ENCODE measurements at regions of chr16 and their contacts with region 1.

Region 1: DNA sequence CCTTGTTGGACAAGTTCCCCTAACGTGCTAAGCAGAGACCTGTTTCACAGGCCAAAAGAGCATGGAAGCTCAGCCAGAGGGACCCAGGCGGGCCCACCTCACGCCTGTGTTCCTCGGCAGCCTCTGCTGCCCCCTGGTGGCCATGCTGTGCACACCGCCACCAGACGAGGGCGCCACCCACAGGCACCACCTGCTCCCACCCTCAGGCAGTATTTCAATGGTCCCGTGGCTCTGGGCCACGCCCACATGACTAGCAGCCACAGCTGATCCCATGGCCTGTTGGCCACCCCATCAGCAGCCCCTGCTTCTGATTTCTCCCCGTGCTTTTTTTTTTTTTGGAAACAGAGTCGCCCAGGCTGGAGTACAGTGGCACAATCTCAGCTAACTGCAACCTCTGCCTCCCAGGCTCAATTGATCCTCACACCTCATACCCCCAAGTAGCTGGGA is 18.9 kb downstream of the MPG start:
- DNase-seq: peak; percentile 95
- H3K4me3 ChIP-seq: no peak overlapping the region; a peak in 1 of 4 replicates
- H3K27ac ChIP-seq: no peak overlapping the region
- H3K4me1 ChIP-seq: peaks cover 0 to 8% of the 10 kb centered on the region in 2 experiments; a peak in 1 of 4 replicates
- H3K27me3 ChIP-seq: no peaks in the 10 kb centered on the region
- CTCF ChIP-seq: peak; percentile 99
- EP300 ChIP-seq: no peak
- RAD21 ChIP-seq: peak; percentile 83

Region 2: GRCh38 chr16:77807-78443 is 19.0 kb before region 1 on chr16 and contains the start of gene MPG:
- CTCF ChIA-PET with region 1: interaction called, 793 read pairs
- POLR2A ChIA-PET with region 1: interaction called, 5 read pairs
- DNase-seq: peak; percentile 100
- H3K4me3 ChIP-seq: peak within 1 kb of the TSS; percentile 76 to 92
- H3K27ac ChIP-seq: peak within 1 kb of the TSS; percentile 58 to 84
- H3K4me1 ChIP-seq: peaks cover 20 to 51% of the 10 kb centered on the region in 2 experiments
- H3K27me3 ChIP-seq: no peaks in the 10 kb centered on the region
- CTCF ChIP-seq: no peak
- EP300 ChIP-seq: no peak
- RAD21 ChIP-seq: no peak
- polyA plus RNA-seq, gene MPG: 93.3 and 98.3 TPM in 2 replicates

Region 3: DNA sequence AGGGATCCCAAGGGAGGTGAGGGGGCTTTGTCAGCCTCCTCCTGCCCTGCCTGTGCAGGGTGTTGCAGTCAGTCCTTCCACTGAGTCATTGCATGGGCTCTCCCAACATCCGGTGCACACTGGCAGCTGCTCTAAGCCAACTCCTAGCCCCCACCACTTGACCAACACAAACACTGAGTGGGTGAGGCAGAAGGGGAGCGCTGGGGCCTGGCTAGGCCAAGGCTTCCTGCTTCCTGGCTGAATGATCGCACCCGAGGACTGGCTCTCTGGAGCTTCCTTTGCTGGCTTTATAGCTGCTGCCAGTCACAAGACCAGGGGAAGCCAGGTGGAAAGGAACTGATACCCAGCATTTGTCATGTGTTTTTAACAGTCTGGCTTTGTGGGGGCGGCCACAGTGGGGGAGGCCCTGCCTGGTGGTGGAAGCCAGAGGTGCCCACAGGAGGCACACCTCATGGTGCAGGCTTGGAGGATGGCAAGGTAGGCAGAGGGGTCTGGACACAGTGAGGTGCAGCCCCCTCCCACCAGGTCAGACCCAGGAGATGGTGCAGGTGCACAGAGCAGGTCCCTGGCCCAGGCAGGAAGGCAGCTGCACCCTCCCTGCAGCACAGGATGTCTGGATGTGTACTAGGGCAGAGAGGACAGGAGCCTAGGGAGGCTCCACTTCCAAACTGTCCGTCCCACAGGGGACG is 12.1 kb before region 1 on chr16:
- CTCF ChIA-PET with region 1: interaction called, 45 read pairs
- POLR2A ChIA-PET with region 1: no interaction called
- DNase-seq: no peak
- H3K4me3 ChIP-seq: no peak overlapping the region
- H3K27ac ChIP-seq: peak overlapping the region; percentile 5 to 72; a peak in 2 of 4 replicates
- H3K4me1 ChIP-seq: peaks cover 2 to 17% of the 10 kb centered on the region in 2 experiments; a peak in 3 of 4 replicates
- H3K27me3 ChIP-seq: no peaks in the 10 kb centered on the region
- CTCF ChIP-seq: no peak
- EP300 ChIP-seq: peak in 1 of 2 experiments; percentile 25; a peak in 1 of 4 replicates
- RAD21 ChIP-seq: no peak

Measured in SK-N-SH (cell line).